ENCODE measurements at regions of chr3 and their contacts with region 1.

Region 1: GRCh38 chr3:182683453-182683852 is 109.9 kb upstream of the ATP11B start:
- DNase-seq: peak; percentile 16 to 38 (median 37)
- H3K4me3 ChIP-seq: no peak overlapping the region
- H3K4me3 Mint-ChIP-seq: peak overlapping the region in 1 of 2 donors; percentile 87
- H3K27ac ChIP-seq: no peak overlapping the region
- H3K27ac Mint-ChIP-seq: no peak overlapping the region
- H3K4me1 ChIP-seq: peaks cover 8 to 16% of the 10 kb centered on the region in 2 donors
- H3K4me1 Mint-ChIP-seq: peaks cover 16% of the 10 kb centered on the region
- H3K27me3 ChIP-seq: peaks cover 61 to 70% of the 10 kb centered on the region in 2 donors
- H3K27me3 Mint-ChIP-seq: peaks cover 70 to 76% (median 70%) of the 10 kb centered on the region in 3 donors
- CTCF ChIP-seq: peak; percentile 87

Region 2: DNA sequence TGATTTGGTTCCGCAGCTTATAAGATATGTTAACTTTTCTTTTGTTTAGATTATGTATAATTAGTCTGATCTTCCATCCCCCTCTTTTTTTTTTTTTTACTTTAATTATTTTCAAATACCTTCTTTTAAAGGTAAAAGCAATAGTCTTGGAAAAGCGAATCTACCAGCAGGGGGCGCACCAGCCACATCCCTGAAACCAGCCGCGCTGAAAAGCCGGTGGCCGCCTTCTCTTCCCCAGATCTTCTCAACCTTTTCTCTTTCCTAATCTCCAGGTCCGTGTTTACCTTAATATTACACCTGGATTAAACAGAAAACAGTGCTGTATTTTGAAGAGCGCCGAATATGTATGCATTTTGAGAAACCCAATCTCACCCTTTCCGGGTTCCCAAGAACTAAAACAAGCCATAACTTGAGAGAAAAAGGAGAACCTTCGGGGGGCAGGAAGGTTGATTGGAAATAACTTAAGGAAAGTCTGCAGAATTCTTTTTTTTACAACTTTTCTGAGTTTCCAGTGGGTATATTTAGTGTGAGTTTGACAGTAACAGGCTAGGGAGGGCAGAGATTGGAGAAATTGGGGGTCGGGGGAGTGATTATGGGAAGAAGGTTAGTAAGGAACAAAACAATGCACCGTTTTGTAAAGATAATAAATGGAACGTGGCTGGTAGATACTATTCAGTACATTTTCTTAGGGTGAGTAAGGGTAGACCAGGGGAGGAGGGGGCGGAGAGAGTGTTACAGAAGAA is 973.7 kb before region 1 on chr3:
- intact Hi-C with region 1: loop called (anchors 5 kb)
- DNase-seq: peak; percentile 15 to 48 (median 40)
- H3K4me3 ChIP-seq: peak overlapping the region in 1 of 3 experiments; percentile 46
- H3K4me3 Mint-ChIP-seq: peak overlapping the region; percentile 63 to 86
- H3K27ac ChIP-seq: no peak overlapping the region
- H3K27ac Mint-ChIP-seq: no peak overlapping the region
- H3K4me1 ChIP-seq: peaks cover 14 to 21% of the 10 kb centered on the region in 2 donors
- H3K4me1 Mint-ChIP-seq: peaks cover 18% of the 10 kb centered on the region
- H3K27me3 ChIP-seq: peaks cover 87 to 98% of the 10 kb centered on the region in 2 donors
- H3K27me3 Mint-ChIP-seq: peaks cover 59 to 76% (median 76%) of the 10 kb centered on the region in 3 donors
- CTCF ChIP-seq: peak; percentile 95

Measured in CD14-positive monocyte (primary cell).